ENCODE measurements at regions of chr5 and their contacts with region 1.

Region 1: DNA sequence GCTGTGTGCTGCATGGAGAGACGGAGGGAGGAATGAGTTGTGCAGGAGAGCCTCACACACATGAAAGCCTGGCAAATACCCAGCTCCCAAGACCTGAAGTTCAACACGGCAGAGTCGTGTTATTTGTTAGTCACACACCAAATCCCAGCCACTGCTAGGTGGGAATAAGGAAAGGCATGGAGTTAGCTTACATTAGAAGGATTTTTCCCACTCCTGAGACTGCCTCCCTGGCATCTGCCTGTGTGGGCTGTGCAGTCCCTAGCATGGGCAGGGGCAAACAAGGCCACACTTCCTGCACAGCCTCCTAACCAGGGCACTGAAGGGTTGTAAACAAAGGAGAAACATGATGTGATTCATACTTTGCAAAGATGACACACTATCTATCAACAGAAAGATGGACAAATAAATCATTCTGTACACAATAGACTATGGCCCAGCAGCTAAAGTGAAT is 306.8 kb downstream of the SPOCK1 start:
- DNase-seq: peak; percentile 86
- ATAC-seq: peak; percentile 90
- H3K4me3 ChIP-seq: no peak overlapping the region
- H3K27ac ChIP-seq: peak overlapping the region; percentile 87
- H3K4me1 ChIP-seq: peaks cover 52% of the 10 kb centered on the region
- H3K27me3 ChIP-seq: no peaks in the 10 kb centered on the region
- CTCF ChIP-seq: no peak

Region 2: GRCh38 chr5:136811551-136811950 is 380.8 kb before region 1 on chr5:
- CTCF ChIA-PET with region 1: no interaction called
- POLR2A ChIA-PET with region 1: interaction called, 7 read pairs
- intact Hi-C with region 1: loop called (anchors 1 kb)
- DNase-seq: peak; percentile 83
- ATAC-seq: peak; percentile 93
- H3K4me3 ChIP-seq: 0 out of 2 replicates have a peak overlapping the region, but pooled peaks have one; percentile 37
- H3K27ac ChIP-seq: peak overlapping the region; percentile 98
- H3K4me1 ChIP-seq: peaks cover 28% of the 10 kb centered on the region
- H3K27me3 ChIP-seq: no peaks in the 10 kb centered on the region
- CTCF ChIP-seq: no peak

Region 3: DNA sequence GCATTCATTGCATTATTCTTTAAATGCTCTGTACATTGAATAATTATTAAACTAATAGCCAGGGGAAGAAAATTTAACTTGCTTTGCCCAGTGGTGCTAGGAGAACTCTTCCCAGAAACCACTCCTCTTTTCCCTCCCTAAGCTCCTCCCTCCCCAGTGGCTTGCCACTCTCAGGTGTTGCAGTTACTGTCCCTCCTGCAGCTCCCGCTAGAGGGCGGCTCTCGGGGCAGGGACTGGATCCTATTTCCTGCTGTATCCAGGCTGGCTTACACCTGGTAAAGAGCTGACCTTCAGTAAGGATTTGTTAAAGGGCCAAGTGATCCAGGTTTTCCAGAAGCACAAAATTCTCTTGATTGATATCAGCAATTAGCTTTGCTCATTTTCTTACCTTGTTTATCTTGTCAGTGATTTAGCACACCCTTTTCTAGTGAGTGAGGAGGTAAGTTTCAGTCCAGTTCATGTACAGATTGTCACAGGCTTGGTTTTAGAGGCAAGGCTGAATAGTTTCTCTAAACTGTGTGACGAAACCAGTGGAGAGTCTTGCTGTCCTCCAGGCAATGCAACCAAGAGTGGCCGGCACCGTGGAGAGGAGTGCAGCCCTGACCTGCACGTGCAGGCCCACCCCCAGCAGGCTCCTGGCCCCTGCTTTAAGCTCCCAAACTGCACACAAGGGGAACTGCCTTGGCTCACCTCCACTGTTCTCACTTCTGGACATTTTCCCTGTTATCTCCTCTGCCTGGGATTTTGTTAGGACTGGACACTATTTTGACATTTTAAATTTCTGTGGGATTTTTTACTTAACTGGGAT is 117.0 kb before region 1 on chr5:
- CTCF ChIA-PET with region 1: interaction called, 7 read pairs
- POLR2A ChIA-PET with region 1: no interaction called
- intact Hi-C with region 1: loop called (anchors 1 kb)
- DNase-seq: peak; percentile 84
- ATAC-seq: peak; percentile 73
- H3K4me3 ChIP-seq: no peak overlapping the region
- H3K27ac ChIP-seq: no peak overlapping the region
- H3K4me1 ChIP-seq: peaks cover 39% of the 10 kb centered on the region
- H3K27me3 ChIP-seq: no peaks in the 10 kb centered on the region
- CTCF ChIP-seq: peak; percentile 79

Region 4: DNA sequence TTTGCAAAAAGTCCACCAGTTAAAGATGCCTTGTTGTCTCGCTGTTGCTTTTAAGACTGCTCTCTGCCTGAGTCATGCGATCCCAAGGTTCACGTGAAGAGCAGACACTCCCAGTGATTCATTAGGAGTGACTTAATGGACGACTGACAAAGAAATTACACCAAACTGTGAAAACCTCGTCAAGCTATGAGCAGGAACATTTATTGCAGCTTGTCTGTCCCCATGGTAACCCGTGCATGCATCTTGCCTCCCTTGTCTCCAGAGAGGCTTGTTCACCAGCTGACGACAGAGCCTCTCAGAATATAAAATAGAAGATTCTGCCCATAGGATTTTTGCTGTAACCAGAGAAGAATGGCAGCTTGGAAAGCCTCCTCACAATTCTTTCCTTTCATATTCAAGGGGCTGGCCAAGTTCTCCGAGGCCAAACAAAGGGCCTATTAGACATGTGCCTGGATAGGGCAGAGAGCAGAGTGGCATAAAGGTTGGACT is 45.9 kb before region 1 on chr5:
- CTCF ChIA-PET with region 1: no interaction called
- POLR2A ChIA-PET with region 1: no interaction called
- intact Hi-C with region 1: loop called (anchors 1 kb)
- DNase-seq: peak; percentile 74
- ATAC-seq: peak; percentile 71
- H3K4me3 ChIP-seq: no peak overlapping the region
- H3K27ac ChIP-seq: peak overlapping the region; percentile 54
- H3K4me1 ChIP-seq: peaks cover 52% of the 10 kb centered on the region
- H3K27me3 ChIP-seq: no peaks in the 10 kb centered on the region
- CTCF ChIP-seq: no peak

Measured in PC-3 (cell line).